Activated CD4-positive, alpha-beta T cell treated with anti-CD3 and anti-CD28 coated beads for 36 hours (primary cell): ENCODE measurements at regions of chr9 and their contacts with region 1.

Region 1: GRCh38 chr9:136482793-136483588 is at the start of gene SEC16A:
- DNase-seq: peak; percentile 100
- ATAC-seq: peak; percentile 76
- H3K4me3 Mint-ChIP-seq: peak within 1 kb of the TSS; percentile 97
- H3K27ac Mint-ChIP-seq: peak within 1 kb of the TSS; percentile 98
- H3K4me1 Mint-ChIP-seq: peaks cover 35% of the 10 kb centered on the region
- H3K27me3 Mint-ChIP-seq: no peaks in the 10 kb centered on the region
- total RNA-seq, gene SEC16A: 62.7 TPM

Region 2: DNA sequence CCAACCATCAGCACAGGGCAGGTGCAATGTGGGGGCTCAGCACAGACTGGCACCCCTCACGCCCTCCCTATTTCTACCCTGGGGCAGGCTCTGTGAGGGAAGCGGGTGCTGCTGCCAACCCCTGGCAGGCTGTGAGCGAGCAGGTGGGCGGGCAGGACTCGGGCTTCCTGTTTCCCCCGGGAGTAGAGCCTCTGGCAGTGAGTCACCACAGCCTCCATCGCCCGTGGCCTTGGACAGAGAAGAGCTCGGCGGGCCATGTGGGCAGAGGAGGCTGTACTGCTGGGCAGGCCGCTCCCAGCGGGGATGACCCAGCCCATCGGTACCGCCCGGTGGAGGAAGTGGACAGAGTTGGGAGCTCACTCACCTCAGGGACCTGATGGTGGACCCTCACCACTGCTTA is 764.4 kb before region 1 on chr9:
- CTCF ChIA-PET with region 1: no interaction called
- POLR2A ChIA-PET with region 1: no interaction called
- intact Hi-C with region 1: no loop called
- DNase-seq: peak; percentile 23
- ATAC-seq: no peak
- H3K4me3 Mint-ChIP-seq: no peak overlapping the region
- H3K27ac Mint-ChIP-seq: no peak overlapping the region
- H3K4me1 Mint-ChIP-seq: no peaks in the 10 kb centered on the region
- H3K27me3 Mint-ChIP-seq: peaks cover 22% of the 10 kb centered on the region

Region 3: DNA sequence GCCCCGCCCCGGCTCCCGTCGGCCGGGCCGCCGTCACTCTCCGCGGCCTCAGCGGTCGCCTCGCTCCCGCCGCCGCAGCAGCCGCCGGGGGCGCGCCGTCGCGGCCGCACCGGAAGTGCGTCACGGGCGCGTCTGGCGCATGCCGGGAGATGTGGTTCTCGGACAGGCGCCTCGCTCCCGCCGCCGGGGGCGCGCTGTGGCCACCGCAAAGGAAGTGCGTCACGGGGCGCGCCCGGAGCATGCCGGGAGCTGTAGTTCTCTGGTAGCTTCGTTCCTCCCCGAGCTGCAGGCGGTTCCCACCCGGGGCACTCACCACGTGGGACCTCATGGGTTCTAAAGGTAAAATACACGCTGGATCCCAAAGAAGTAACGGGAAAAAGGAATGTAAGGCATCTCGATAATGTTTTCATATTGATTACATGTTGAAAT is 521.7 kb before region 1 on chr9 and contains the start of gene UBAC1:
- CTCF ChIA-PET with region 1: no interaction called
- POLR2A ChIA-PET with region 1: no interaction called
- intact Hi-C with region 1: loop called in 1 of 2 experiments (anchors 1 kb)
- DNase-seq: peak; percentile 98
- ATAC-seq: peak; percentile 92
- H3K4me3 Mint-ChIP-seq: peak within 1 kb of the TSS; percentile 87
- H3K27ac Mint-ChIP-seq: peak within 1 kb of the TSS; percentile 73
- H3K4me1 Mint-ChIP-seq: peaks cover 32% of the 10 kb centered on the region
- H3K27me3 Mint-ChIP-seq: no peaks in the 10 kb centered on the region
- total RNA-seq, gene UBAC1: 41.7 to 42.8 TPM

Region 4: DNA sequence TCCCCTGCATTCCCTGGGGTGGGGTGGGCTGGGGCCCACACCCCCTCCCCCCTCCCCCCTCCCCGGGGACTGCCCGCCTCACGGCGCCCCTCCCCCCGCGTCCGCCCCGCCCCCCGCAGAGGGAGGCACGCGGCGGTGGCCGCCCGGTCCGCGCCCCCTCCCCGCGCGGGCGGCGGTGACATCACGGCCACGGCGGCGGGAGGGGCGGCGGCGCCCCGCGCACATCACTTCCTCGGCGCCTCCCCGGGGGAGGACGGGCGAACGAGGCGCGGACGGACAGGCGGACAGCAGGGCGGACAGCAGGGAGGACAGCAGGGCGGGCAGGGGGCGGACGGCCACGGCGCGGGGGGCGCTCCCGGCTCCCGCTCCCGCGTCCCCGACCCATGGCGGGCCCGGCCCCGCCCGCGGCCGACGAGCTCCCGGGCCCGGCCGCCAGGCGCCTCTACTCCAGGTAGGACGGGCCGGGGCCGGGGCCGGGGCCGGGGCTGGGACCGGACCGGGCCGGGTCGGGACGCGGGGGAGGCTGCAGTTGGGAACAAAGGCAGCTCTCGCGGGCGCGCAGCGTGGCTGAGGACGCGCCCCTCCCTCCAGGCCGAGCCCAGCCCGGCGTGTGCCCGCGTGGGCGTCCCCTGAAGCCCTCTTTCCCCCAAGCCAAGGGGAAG is 155.5 kb before region 1 on chr9 and contains the start of gene GPSM1:
- CTCF ChIA-PET with region 1: no interaction called
- POLR2A ChIA-PET with region 1: no interaction called
- intact Hi-C with region 1: no loop called
- DNase-seq: peak; percentile 65
- ATAC-seq: peak; percentile 59
- H3K4me3 Mint-ChIP-seq: peak within 1 kb of the TSS; percentile 59
- H3K27ac Mint-ChIP-seq: no peak within 1 kb of the TSS
- H3K4me1 Mint-ChIP-seq: peaks cover 6% of the 10 kb centered on the region
- H3K27me3 Mint-ChIP-seq: no peaks in the 10 kb centered on the region
- total RNA-seq, gene GPSM1: 9.6 to 10.8 TPM

Region 5: DNA sequence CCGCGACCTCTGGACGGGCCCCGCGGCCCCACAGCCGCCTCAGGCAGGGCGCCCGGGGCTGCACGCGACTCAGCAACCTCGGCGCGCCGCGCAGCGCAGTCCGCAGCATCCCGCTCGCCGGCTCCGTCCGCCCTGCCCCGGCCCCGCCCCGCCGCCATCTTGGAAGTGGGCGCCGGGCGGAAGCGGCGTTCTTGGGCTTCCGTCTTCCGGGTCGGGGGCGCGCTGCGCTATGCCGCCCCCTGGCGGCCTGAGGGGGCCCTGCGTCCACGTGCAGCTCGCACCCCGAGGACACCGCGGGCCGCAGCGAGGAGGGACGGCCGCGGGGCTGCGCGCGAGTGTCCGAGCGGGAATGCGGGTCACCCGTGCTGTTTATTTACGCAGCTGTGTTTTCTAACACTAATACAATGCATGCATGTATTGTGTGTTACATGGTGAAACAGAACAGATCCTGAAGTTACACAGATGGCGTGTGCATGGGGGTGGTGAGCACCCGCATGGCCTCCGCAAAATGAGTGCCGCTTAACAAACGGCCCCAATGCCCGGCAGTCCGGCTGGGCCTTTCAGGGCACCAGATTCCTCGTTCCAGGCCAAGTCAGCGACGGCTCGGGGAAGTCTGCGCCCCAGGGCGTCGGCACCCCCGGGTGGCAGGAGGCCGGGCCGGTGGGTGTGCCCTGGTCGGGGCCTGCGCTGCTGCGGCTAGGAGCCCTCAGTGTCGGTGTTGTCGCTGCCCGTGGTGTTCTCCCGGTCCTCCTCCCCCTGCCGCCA is 119.2 kb before region 1 on chr9 and contains the start of gene DNLZ:
- CTCF ChIA-PET with region 1: interaction called, 3 read pairs
- POLR2A ChIA-PET with region 1: no interaction called
- intact Hi-C with region 1: loop called in 1 of 2 experiments (anchors 1 kb)
- DNase-seq: peak; percentile 93
- ATAC-seq: peak; percentile 73
- H3K4me3 Mint-ChIP-seq: peak within 1 kb of the TSS; percentile 79
- H3K27ac Mint-ChIP-seq: peak within 1 kb of the TSS; percentile 80
- H3K4me1 Mint-ChIP-seq: peaks cover 10% of the 10 kb centered on the region
- H3K27me3 Mint-ChIP-seq: no peaks in the 10 kb centered on the region
- total RNA-seq, gene DNLZ: 11.7 to 12.8 TPM

Region 6: DNA sequence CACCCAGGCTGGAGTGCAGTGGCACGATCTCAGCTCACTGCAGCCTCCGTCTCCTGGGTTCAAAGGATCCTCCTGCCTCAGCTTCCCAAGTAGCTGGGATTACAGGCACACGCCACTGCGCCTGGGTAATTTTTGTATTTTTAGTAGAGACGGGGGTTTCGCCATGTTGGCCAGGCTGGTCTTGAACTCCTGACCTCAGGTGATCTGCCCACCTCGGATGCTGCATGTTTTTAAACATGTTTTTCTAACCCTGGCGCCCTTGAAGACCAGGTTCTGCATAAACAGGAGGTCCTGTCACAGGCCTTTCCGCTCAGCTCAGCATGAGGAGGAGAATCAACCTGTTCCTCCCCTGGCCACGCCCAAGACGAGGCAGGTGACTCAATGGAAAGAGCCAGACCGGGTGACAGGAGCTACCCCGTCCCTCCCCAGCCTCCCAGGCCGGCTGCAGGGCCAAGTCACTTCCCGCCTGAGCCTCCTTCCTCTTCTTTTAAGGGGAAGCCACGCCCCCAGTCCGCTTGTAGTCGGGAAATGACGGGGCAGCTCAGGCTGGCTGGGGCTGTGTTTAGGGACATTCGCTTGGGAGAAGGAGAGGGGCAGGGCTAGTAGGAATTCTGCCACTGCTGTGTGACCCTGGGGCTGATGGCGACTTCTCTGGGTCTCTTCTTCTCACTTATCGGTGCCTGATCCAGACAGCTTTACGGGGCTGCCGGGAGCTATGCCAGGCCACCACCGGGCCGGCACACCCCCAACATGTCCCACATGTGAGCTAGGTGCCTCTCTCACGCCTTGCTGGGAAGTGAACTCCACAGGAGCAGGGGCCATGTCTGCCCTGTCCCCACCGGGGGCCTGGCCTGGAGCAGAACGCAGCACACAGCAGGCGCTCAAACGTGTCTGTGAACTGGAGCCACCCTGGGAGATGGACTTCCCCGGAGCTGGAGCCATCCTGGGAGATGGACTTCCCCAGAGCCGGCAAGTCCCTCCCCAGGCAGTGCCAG is 56.7 kb after region 1 on chr9:
- CTCF ChIA-PET with region 1: interaction called, 14 read pairs
- POLR2A ChIA-PET with region 1: no interaction called
- intact Hi-C with region 1: loop called (anchors 1 to 2 kb)
- DNase-seq: peak; percentile 99
- ATAC-seq: peak; percentile 81
- H3K4me3 Mint-ChIP-seq: peak overlapping the region; percentile 65
- H3K27ac Mint-ChIP-seq: peak overlapping the region; percentile 99
- H3K4me1 Mint-ChIP-seq: peaks cover 74% of the 10 kb centered on the region
- H3K27me3 Mint-ChIP-seq: no peaks in the 10 kb centered on the region

Region 7: GRCh38 chr9:136694236-136694942 is 211.4 kb after region 1 on chr9:
- CTCF ChIA-PET with region 1: interaction called, 4 read pairs
- POLR2A ChIA-PET with region 1: no interaction called
- intact Hi-C with region 1: loop called in 1 of 2 experiments (anchors 1 kb)
- DNase-seq: peak; percentile 74
- ATAC-seq: peak; percentile 82
- H3K4me3 Mint-ChIP-seq: no peak overlapping the region
- H3K27ac Mint-ChIP-seq: no peak overlapping the region
- H3K4me1 Mint-ChIP-seq: no peaks in the 10 kb centered on the region
- H3K27me3 Mint-ChIP-seq: peaks cover 9% of the 10 kb centered on the region

Region 8: DNA sequence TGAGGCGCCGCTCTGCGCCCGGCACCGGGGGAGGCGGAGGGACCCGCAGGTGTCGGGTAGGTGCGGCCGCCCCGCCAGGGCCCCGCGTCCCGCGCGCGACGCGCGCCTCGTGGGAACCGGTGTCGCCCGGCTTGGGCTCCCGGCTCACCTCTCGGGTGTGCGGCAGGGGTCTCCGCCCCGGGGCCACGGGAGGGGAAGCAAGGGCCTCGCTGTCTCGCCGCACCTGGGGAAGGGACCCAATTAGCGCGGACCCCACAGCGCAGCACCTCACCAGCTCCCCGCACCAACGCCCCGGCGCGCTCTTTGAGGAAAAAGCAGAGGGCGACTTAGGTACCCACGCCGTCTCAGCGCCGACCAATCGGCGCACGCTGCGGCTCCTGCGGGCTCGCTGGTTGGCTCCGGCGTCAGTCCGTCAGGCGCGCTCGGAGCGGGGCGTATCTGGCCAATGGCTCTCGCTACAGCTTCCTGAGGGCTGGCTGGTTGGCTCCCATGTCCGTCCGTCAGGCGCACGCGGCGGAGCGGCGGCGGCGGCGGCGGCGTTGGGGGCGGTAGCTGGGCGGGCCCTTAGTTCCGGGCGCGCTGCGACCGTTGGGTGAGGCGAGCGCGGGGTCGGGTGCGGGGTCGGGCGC is 403.1 kb after region 1 on chr9 and contains the start of gene TRAF2:
- CTCF ChIA-PET with region 1: no interaction called
- POLR2A ChIA-PET with region 1: no interaction called
- intact Hi-C with region 1: loop called in 1 of 2 experiments (anchors 5 kb)
- DNase-seq: peak; percentile 98
- ATAC-seq: peak; percentile 89
- H3K4me3 Mint-ChIP-seq: peak within 1 kb of the TSS; percentile 85
- H3K27ac Mint-ChIP-seq: peak within 1 kb of the TSS; percentile 95
- H3K4me1 Mint-ChIP-seq: peaks cover 51% of the 10 kb centered on the region
- H3K27me3 Mint-ChIP-seq: no peaks in the 10 kb centered on the region
- total RNA-seq, gene TRAF2: 37.4 to 46.2 TPM

Region 9: GRCh38 chr9:137045294-137046097 is 562.5 kb after region 1 on chr9:
- CTCF ChIA-PET with region 1: no interaction called
- POLR2A ChIA-PET with region 1: no interaction called
- intact Hi-C with region 1: no loop called
- DNase-seq: peak; percentile 57
- ATAC-seq: peak; percentile 38
- H3K4me3 Mint-ChIP-seq: peak overlapping the region; percentile 61
- H3K27ac Mint-ChIP-seq: no peak overlapping the region
- H3K4me1 Mint-ChIP-seq: peaks cover 12% of the 10 kb centered on the region
- H3K27me3 Mint-ChIP-seq: peaks cover 34% of the 10 kb centered on the region

Region 10: GRCh38 chr9:137200311-137201204 is 717.6 kb after region 1 on chr9 and contains the start of gene TPRN:
- CTCF ChIA-PET with region 1: no interaction called
- POLR2A ChIA-PET with region 1: no interaction called
- intact Hi-C with region 1: loop called in 1 of 2 experiments (anchors 1 kb)
- DNase-seq: peak; percentile 99
- ATAC-seq: peak; percentile 99
- H3K4me3 Mint-ChIP-seq: peak within 1 kb of the TSS; percentile 79
- H3K27ac Mint-ChIP-seq: peak within 1 kb of the TSS; percentile 76
- H3K4me1 Mint-ChIP-seq: peaks cover 29% of the 10 kb centered on the region
- H3K27me3 Mint-ChIP-seq: no peaks in the 10 kb centered on the region
- total RNA-seq, gene TPRN: 5.6 to 5.8 TPM